ENCODE measurements at regions of chr18 and their contacts with region 1.

Region 1: DNA sequence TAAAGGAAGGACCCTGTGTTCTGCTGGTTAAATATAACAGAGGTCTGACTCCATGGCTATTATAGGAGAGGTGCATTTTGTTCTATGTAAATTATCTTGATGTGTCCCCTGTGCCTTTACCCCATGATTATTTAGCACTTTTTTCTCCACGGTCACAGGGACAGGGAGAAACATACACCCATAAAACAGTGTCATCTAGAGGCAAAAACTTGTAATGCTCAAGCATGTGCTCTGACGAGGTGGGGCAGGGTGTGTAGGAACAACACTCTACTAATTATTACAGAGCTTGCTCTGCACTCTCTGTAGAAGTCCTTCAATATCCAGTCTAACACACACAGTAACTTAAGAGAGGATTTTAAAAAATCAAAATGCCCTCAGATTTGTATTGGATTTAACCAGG is 187.9 kb downstream of the NEDD4L start:
- DNase-seq: peak in 3 of 4 donors; percentile 44 to 62 (median 58)
- ATAC-seq: peak; percentile 72
- H3K4me3 ChIP-seq: no peak overlapping the region
- H3K27ac ChIP-seq: peak overlapping the region; percentile 77 to 83 (median 80)
- H3K4me1 ChIP-seq: peaks cover 86% of the 10 kb centered on the region
- H3K27me3 ChIP-seq: no peaks in the 10 kb centered on the region
- CTCF ChIP-seq: peak; percentile 7 to 68 (median 55)
- POLR2A ChIP-seq: peak in 1 of 3 donors; percentile 19

Region 2: DNA sequence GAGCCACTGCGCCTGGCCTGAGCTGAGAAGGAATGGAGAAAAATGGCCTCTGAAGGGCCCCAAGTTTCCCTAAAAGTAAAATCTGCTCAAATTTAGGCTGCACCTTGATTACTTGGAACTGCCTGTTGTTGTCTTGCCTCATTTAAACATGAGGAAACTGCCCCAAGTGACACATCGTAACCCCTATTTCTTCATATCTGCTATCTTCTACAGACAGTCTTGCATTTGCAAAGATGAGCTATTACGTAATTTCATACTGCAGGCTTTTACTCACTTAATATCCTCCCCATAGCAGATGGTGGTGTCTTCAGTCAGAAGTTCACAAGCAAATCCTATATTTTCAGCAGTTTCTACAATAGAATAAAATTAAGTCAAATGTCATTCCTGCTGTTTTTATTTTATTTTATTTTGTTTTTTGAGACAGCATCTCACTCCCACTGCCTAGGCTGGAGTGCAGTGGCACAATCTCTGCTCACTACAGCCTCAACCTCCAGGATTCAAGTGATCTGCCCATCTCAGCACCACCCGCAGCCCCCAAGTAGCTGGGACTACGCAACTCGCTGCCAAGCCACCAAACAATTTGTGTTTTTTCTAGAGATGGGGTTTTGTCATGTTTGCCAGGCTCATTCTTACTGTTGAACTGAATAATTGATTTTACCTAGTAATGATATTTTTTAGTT is 565.0 kb before region 1 on chr18:
- intact Hi-C with region 1: no loop called
- DNase-seq: peak in 1 of 4 donors; percentile 35
- ATAC-seq: no peak
- H3K4me3 ChIP-seq: no peak overlapping the region
- H3K27ac ChIP-seq: no peak overlapping the region
- H3K4me1 ChIP-seq: no peaks in the 10 kb centered on the region
- H3K27me3 ChIP-seq: no peaks in the 10 kb centered on the region
- CTCF ChIP-seq: no peak
- POLR2A ChIP-seq: no peak

Region 3: DNA sequence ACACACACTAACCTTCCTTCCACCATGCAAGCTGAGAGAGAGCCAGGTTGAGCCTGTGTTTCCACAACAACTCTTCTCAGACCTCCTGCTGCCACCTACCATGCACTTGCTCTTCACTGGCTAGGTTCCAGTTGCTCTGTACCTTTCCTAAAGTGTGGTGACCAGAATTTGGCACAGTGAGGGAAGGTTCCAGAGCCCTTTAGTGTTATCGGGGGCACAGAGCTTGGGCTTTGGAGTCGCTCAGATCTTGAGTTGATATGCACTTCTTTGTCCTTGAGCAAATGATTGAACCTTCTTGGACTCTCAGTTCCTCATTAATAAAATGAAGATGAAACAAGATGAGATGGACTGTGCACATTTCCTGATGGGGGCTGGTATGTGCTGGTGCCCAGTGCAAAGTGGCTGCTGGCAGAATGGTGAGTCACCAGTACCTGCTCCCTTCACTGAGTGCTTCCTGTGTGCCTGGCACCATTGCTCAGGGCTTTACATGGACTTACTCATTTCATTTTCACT is 140.8 kb before region 1 on chr18:
- intact Hi-C with region 1: no loop called
- DNase-seq: peak; percentile 56 to 79 (median 74)
- ATAC-seq: peak; percentile 35
- H3K4me3 ChIP-seq: no peak overlapping the region
- H3K27ac ChIP-seq: peak overlapping the region; percentile 5 to 94 (median 90)
- H3K4me1 ChIP-seq: peaks cover 90% of the 10 kb centered on the region
- H3K27me3 ChIP-seq: no peaks in the 10 kb centered on the region
- CTCF ChIP-seq: no peak
- POLR2A ChIP-seq: no peak

Region 4: GRCh38 chr18:58303363-58303762 is 71.4 kb after region 1 on chr18:
- intact Hi-C with region 1: loop called (anchors 10 kb)
- DNase-seq: no peak
- ATAC-seq: no peak
- H3K4me3 ChIP-seq: no peak overlapping the region
- H3K27ac ChIP-seq: no peak overlapping the region
- H3K4me1 ChIP-seq: peaks cover 6% of the 10 kb centered on the region
- H3K27me3 ChIP-seq: no peaks in the 10 kb centered on the region
- CTCF ChIP-seq: no peak
- POLR2A ChIP-seq: no peak

Region 5: GRCh38 chr18:58321986-58322385 is 90.1 kb after region 1 on chr18:
- intact Hi-C with region 1: no loop called
- DNase-seq: peak; percentile 61 to 89 (median 82)
- ATAC-seq: peak; percentile 94
- H3K4me3 ChIP-seq: no peak overlapping the region
- H3K27ac ChIP-seq: peak overlapping the region in 3 of 4 donors; percentile 32 to 64 (median 57)
- H3K4me1 ChIP-seq: peaks cover 26% of the 10 kb centered on the region
- H3K27me3 ChIP-seq: no peaks in the 10 kb centered on the region
- CTCF ChIP-seq: peak; percentile 19 to 87 (median 59)
- POLR2A ChIP-seq: peak in 2 of 3 donors; percentile 18 to 38

Measured in body of pancreas (tissue), 4 donors.